ENCODE measurements at regions of chr15 and their contacts with region 1.

Region 1: DNA sequence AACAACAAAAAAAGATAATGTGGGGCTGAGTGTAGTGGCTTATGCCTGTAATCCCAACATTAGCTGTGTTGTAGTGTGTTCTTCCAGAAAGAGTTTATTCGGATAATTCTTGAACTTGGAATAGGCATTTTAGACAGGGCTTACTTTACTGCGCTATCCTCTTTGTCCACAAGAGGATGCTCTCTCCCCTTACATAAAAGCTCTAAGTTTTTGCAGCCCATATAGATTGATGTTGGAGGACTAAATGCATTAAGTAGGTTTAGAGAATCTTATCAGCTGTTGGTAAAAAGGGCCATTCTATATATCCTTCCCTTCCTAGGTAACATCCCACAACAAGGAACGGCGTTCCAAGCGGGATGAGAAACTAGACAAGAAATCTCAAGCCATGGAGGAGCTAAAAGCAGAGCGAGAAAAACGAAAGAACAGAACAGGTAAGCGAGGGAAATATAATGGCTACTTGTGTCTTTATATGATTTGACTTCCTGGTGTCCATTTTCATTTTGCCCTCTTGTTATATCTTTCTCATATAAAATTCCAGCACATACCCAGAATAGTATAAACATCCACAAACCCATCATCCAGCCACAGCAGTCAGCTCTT is 27.8 kb upstream of the ITPKA start:
- DNase-seq: no peak
- ATAC-seq: peak; percentile 65
- H3K4me3 ChIP-seq: no peak overlapping the region
- H3K27ac ChIP-seq: no peak overlapping the region
- H3K4me1 ChIP-seq: no peaks in the 10 kb centered on the region
- H3K27me3 ChIP-seq: no peaks in the 10 kb centered on the region
- CTCF ChIP-seq: peak; percentile 96 to 99 (median 99)
- EP300 ChIP-seq: no peak
- POLR2A ChIP-seq: no peak
- RAD21 ChIP-seq: peak; percentile 96

Region 2: DNA sequence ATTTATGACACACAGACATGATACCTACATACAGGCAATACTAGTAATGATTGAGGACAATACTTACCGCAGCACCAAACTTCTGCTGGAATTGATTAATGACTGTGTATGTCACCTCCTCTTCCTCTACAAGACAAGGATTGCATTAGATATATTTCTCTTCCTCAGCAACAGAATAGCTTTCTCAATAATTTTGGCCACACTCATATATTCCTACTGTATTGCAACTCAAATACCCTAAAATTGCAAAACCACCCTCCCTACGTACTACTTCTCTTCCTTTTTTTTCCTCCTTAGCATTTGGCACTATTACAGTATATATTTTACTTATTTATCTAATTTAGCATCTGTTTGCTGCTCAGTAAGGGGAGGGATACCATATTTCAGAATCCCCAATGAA is 250.2 kb before region 1 on chr15:
- CTCF ChIA-PET with region 1: no interaction called
- POLR2A ChIA-PET with region 1: no interaction called
- RAD21 ChIA-PET with region 1: no interaction called
- SMC1A ChIA-PET with region 1: no interaction called
- in situ Hi-C with region 1: no loop called
- intact Hi-C with region 1: no loop called
- DNase-seq: no peak
- ATAC-seq: no peak
- H3K4me3 ChIP-seq: no peak overlapping the region
- H3K27ac ChIP-seq: no peak overlapping the region
- H3K4me1 ChIP-seq: no peaks in the 10 kb centered on the region
- H3K27me3 ChIP-seq: peaks cover 0 to 4% of the 10 kb centered on the region in 2 experiments; a peak in 2 of 4 replicates
- CTCF ChIP-seq: no peak
- EP300 ChIP-seq: no peak
- POLR2A ChIP-seq: no peak
- RAD21 ChIP-seq: no peak

Region 3: GRCh38 chr15:41429003-41429890 is 36.7 kb before region 1 on chr15:
- CTCF ChIA-PET with region 1: interaction called, 10 read pairs
- POLR2A ChIA-PET with region 1: no interaction called
- RAD21 ChIA-PET with region 1: interaction called, 3 read pairs
- SMC1A ChIA-PET with region 1: no interaction called
- in situ Hi-C with region 1: no loop called
- intact Hi-C with region 1: no loop called
- DNase-seq: peak; percentile 65
- ATAC-seq: peak; percentile 92
- H3K4me3 ChIP-seq: peak overlapping the region; percentile 59; the same call in 1 of the 2 replicates
- H3K27ac ChIP-seq: peak overlapping the region; percentile 91
- H3K4me1 ChIP-seq: peaks cover 20% of the 10 kb centered on the region
- H3K27me3 ChIP-seq: no peaks in the 10 kb centered on the region
- CTCF ChIP-seq: no peak
- EP300 ChIP-seq: no peak
- POLR2A ChIP-seq: no peak
- RAD21 ChIP-seq: no peak

Region 4: DNA sequence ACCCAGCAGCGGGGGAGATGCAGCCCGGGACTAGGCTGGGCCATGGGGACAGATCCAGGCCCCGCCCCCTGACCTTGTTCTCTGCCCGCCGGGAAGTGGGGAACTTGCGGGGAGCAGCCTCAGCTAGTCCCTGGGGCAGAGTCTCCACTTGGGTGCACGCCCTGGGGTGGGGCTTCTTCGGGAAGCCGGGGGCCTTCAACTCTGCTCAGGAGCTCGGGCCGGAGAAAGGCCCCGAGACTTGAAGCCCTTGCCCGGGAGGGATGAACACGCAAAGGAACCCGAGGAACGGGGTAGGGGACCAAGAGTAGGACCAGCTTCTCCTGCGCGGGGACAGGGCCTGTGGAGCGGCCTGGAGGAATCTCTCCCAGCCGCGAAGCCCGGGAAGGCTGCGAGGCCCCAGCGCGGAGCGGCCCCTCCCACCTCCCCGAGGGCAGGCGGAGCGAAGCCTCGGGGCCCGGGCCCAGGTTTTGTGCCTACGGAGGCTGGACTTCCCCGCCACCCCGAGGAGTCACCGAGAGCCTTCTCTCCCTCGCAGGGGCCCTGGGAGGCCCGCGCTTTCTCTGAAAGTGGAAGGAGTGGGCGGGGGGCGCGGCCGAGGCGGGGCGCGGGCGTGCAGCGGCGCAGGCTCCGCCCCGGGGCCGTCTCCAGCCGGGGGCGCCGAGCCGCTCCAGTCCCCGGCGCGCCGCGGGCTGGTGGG is 27.4 kb after region 1 on chr15 and contains the start of gene ITPKA:
- CTCF ChIA-PET with region 1: interaction called, 19 read pairs
- POLR2A ChIA-PET with region 1: interaction called, 3 read pairs
- RAD21 ChIA-PET with region 1: interaction called, 16 read pairs
- SMC1A ChIA-PET with region 1: interaction called, 4 read pairs
- in situ Hi-C with region 1: no loop called
- intact Hi-C with region 1: no loop called
- DNase-seq: peak; percentile 30
- ATAC-seq: peak; percentile 80
- H3K4me3 ChIP-seq: peak within 1 kb of the TSS; percentile 73
- H3K27ac ChIP-seq: peak within 1 kb of the TSS; percentile 55
- H3K4me1 ChIP-seq: peaks cover 29% of the 10 kb centered on the region
- H3K27me3 ChIP-seq: peaks cover 7 to 8% of the 10 kb centered on the region in 2 experiments; a peak in 3 of 4 replicates
- CTCF ChIP-seq: no peak
- EP300 ChIP-seq: no peak
- POLR2A ChIP-seq: peak; percentile 76
- RAD21 ChIP-seq: no peak
- polyA plus RNA-seq, gene ITPKA: 0.07 TPM in 1 of 2 experiments, not detected in the other

Region 5: DNA sequence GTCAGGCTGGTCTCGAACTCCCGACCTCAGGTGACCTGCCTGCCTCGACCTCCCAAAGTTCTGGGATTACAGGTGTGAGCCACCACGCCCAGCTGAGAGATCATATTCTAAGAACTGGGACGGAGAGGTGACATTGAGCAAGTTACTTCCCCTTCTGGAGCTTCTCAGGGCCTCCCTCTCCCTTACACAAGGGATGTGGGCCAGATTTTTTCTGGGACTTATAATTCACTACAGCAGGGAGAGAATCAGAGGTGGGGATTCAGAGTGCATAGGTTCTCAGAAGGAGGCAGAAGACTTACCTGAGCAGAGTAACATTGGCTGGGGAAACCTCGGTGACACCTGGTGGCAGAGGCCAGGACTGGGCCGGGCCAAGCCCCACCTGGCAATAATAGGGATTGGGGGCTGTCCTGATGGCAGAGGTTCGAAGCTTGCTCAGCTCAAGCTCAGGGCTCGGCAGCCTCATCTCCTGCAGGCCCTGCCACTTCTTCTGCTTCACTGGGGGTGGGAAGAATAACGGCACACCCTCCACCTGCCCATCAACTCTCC is 40.9 kb after region 1 on chr15:
- CTCF ChIA-PET with region 1: interaction called, 29 read pairs
- POLR2A ChIA-PET with region 1: no interaction called
- RAD21 ChIA-PET with region 1: interaction called, 10 read pairs
- SMC1A ChIA-PET with region 1: interaction called, 5 read pairs
- in situ Hi-C with region 1: no loop called
- intact Hi-C with region 1: no loop called
- DNase-seq: no peak
- ATAC-seq: peak; percentile 30; the same call in 2 of the 3 replicates
- H3K4me3 ChIP-seq: no peak overlapping the region
- H3K27ac ChIP-seq: no peak overlapping the region
- H3K4me1 ChIP-seq: peaks cover 8% of the 10 kb centered on the region
- H3K27me3 ChIP-seq: peaks cover 11 to 14% of the 10 kb centered on the region in 2 experiments
- CTCF ChIP-seq: peak in 2 of 3 experiments; percentile 15 to 29; a peak in 2 of 6 replicates
- EP300 ChIP-seq: no peak
- POLR2A ChIP-seq: no peak
- RAD21 ChIP-seq: 0 out of 2 replicates have a peak, but pooled peaks have one; percentile 9

Region 6: GRCh38 chr15:41557673-41558399 is 91.9 kb after region 1 on chr15:
- CTCF ChIA-PET with region 1: interaction called, 23 read pairs
- POLR2A ChIA-PET with region 1: no interaction called
- RAD21 ChIA-PET with region 1: interaction called, 12 read pairs
- SMC1A ChIA-PET with region 1: interaction called, 4 read pairs
- in situ Hi-C with region 1: no loop called
- intact Hi-C with region 1: loop called (anchors 5 kb)
- DNase-seq: peak; percentile 7
- ATAC-seq: peak; percentile 91
- H3K4me3 ChIP-seq: no peak overlapping the region
- H3K27ac ChIP-seq: no peak overlapping the region
- H3K4me1 ChIP-seq: peaks cover 8% of the 10 kb centered on the region
- H3K27me3 ChIP-seq: peaks cover 4 to 6% of the 10 kb centered on the region in 2 experiments; a peak in 2 of 4 replicates
- CTCF ChIP-seq: peak; percentile 70 to 83 (median 77)
- EP300 ChIP-seq: no peak
- POLR2A ChIP-seq: no peak
- RAD21 ChIP-seq: peak; percentile 79

Region 7: GRCh38 chr15:41695750-41696426 is 230.0 kb after region 1 on chr15:
- CTCF ChIA-PET with region 1: interaction called, 9 read pairs
- POLR2A ChIA-PET with region 1: no interaction called
- RAD21 ChIA-PET with region 1: interaction called, 7 read pairs
- SMC1A ChIA-PET with region 1: interaction called, 5 read pairs
- in situ Hi-C with region 1: no loop called
- intact Hi-C with region 1: loop called (anchors 10 kb)
- DNase-seq: peak; percentile 39
- ATAC-seq: peak; percentile 97
- H3K4me3 ChIP-seq: no peak overlapping the region
- H3K27ac ChIP-seq: no peak overlapping the region
- H3K4me1 ChIP-seq: peaks cover 6% of the 10 kb centered on the region; the same call in 1 of the 2 replicates
- H3K27me3 ChIP-seq: no peaks in the 10 kb centered on the region
- CTCF ChIP-seq: peak; percentile 39 to 63 (median 52); a peak in 5 of 6 replicates
- EP300 ChIP-seq: no peak
- POLR2A ChIP-seq: no peak
- RAD21 ChIP-seq: peak; percentile 57

Region 8: GRCh38 chr15:41894791-41895463 is 429.0 kb after region 1 on chr15:
- CTCF ChIA-PET with region 1: no interaction called
- POLR2A ChIA-PET with region 1: no interaction called
- RAD21 ChIA-PET with region 1: no interaction called
- SMC1A ChIA-PET with region 1: no interaction called
- in situ Hi-C with region 1: no loop called
- intact Hi-C with region 1: no loop called
- DNase-seq: peak; percentile 54
- ATAC-seq: peak; percentile 97
- H3K4me3 ChIP-seq: no peak overlapping the region; the same call in 1 of the 2 replicates
- H3K27ac ChIP-seq: no peak overlapping the region
- H3K4me1 ChIP-seq: peaks cover 15% of the 10 kb centered on the region
- H3K27me3 ChIP-seq: no peaks in the 10 kb centered on the region
- CTCF ChIP-seq: peak in 2 of 3 experiments; percentile 16 to 35; a peak in 3 of 6 replicates
- EP300 ChIP-seq: no peak
- POLR2A ChIP-seq: peak; percentile 58
- RAD21 ChIP-seq: peak; percentile 21